ENCODE measurements at regions of chr11 and their contacts with region 1.

Region 1: GRCh38 chr11:74492974-74493790 is at the start of gene LIPT2:
- H3K4me3 ChIP-seq: peak within 1 kb of the TSS; percentile 70
- H3K27ac ChIP-seq: peak within 1 kb of the TSS; percentile 96
- H3K4me1 ChIP-seq: no peaks in the 10 kb centered on the region
- CTCF ChIP-seq: no peak

Region 2: DNA sequence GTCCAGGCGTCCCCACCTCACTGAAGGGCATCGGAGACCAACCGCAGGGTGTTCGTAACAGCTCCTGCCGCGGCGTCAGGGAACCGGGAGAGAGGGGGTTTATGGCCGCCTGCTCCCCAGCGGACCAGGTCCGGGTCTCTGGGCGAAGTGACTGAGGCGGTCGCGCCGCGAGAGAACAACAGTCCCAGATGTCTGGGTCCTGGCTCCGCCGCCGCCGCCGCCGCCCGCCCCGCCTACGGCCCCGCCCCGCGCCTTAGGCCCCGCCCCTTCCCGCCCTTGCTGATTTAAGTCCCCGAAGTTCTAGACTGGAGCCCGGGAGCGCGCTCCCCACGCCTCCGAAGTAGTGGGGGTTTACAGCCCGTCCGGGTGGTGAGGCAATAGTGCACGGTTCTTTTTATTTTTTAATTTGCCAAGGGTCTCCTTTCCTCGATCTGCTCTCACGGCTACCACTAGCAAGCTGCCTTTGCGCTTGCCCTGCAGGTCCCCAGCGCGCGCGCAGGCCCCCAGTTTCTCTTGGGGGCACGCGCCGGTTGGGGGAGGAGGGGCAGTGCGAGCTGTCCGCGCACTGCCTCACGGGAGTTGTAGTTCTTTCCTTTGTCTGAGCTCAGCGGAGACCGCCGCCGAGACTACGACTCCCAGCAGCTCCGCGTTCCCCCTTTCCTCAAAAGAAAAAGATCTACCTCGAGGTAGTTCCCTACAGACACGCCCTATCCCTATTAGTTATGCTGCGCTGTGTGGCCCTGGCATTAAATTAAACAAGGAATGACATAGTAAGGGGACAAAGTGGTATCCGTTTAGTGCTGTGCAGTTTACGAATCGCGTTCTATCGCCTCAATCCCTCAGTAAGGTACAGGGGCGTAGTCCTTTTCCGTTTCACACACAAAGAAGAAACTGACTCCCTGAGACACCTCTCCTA is 94.7 kb before region 1 on chr11 and contains the start of gene PGM2L1:
- CTCF ChIA-PET with region 1: no interaction called
- POLR2A ChIA-PET with region 1: interaction called, 22 read pairs
- H3K4me3 ChIP-seq: peak within 1 kb of the TSS; percentile 90
- H3K27ac ChIP-seq: peak within 1 kb of the TSS; percentile 47; the same call in 1 of the 2 replicates
- H3K4me1 ChIP-seq: no peaks in the 10 kb centered on the region
- CTCF ChIP-seq: no peak

Region 3: DNA sequence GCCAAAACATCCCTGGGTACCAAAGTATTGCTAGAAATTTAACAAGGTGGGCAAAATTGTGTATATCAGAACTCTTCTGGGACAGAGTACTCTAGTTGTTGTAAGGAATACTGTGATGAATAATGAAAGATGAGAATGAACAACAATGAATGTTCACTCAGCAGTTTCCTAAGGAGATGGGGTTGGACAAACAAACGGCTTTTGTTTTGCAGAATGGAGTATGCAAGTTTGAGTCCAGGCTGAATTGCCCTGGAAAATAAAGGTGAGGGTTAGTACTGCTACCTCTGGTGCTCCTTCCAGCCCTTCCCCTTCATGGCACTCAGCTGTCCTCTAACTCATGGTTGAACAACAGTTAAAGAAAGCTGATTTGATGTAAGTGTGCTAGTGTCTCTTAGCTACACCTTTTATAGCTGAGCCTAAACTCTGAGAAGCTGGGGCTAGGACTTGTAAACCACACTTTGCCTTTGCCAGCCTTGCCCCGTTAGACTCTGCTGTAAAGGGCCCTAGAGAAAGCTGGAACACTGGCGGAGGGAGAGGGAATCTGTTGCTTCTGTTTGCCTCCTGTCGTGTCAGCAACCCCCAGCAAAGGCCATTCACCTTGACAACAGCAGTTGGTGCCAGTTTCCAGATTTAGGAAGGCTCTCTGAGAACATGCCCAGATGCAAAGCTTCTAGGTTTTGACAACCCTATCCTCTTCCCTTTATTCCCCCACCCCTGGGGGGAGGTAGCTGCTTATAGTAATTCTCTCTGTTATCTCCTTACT is 58.0 kb after region 1 on chr11:
- CTCF ChIA-PET with region 1: no interaction called
- POLR2A ChIA-PET with region 1: interaction called, 10 read pairs
- H3K4me3 ChIP-seq: no peak overlapping the region
- H3K27ac ChIP-seq: no peak overlapping the region
- H3K4me1 ChIP-seq: no peaks in the 10 kb centered on the region
- CTCF ChIP-seq: no peak

Region 4: DNA sequence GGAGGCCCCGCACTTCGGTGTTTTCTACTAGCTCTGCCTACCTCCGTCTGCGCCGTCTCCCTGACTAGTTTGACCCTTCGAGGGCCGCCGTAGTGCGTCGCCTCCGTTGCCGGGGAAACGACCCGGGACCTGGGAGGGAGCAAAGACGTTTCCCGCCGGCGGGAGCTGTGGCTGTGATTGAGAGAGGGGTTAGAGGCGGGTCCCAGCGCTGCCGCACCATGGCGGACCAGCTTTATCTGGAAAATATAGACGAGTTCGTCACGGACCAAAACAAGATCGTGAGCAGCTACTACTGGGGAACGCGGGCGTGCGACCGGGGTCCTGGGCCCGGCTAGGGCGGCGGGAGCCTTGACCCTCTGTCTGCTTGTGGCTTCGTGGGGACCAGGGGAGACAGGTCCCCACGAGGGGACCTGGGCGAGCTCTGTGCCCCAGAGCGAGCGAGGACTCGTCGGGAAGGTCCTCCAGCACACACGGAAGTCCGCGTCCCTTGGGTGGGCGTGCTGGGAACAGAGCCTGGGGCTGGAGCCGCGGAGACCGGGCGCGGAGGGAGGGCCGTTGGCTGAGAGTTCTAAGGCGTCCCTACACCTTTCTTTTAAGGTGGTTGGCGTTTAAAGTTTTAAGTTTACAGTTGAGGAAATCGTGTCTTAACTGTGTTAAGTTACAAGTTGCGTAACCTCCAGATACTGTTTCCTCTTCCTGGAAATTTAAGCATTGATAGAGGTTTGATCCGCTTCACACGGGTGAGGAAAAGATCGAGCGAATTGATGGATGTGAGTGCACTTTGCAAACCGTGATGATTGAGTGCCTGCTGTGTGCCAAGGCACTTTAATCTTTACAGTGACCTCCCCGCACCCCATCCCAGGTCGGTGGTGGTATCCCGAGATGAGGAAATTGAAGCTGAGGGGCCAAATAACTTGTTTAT is 99.5 kb after region 1 on chr11 and contains the start of gene POLD3:
- CTCF ChIA-PET with region 1: no interaction called
- POLR2A ChIA-PET with region 1: interaction called, 16 read pairs
- H3K4me3 ChIP-seq: peak within 1 kb of the TSS; percentile 92
- H3K27ac ChIP-seq: peak within 1 kb of the TSS; percentile 89
- H3K4me1 ChIP-seq: no peaks in the 10 kb centered on the region
- CTCF ChIP-seq: no peak

Measured in HEK293 (cell line).